ENCODE measurements at regions of chr6 and their contacts with region 1.

Region 1: GRCh38 chr6:27157459-27158315 is 89.8 kb upstream of the PRSS16 start:
- DNase-seq: peak; percentile 86
- H3K4me3 ChIP-seq: peak overlapping the region; percentile 48 to 82 (median 60)
- H3K27ac ChIP-seq: no peak overlapping the region
- H3K4me1 ChIP-seq: peaks cover 6% of the 10 kb centered on the region
- H3K27me3 ChIP-seq: no peaks in the 10 kb centered on the region
- CTCF ChIP-seq: peak; percentile 16 to 55

Region 2: DNA sequence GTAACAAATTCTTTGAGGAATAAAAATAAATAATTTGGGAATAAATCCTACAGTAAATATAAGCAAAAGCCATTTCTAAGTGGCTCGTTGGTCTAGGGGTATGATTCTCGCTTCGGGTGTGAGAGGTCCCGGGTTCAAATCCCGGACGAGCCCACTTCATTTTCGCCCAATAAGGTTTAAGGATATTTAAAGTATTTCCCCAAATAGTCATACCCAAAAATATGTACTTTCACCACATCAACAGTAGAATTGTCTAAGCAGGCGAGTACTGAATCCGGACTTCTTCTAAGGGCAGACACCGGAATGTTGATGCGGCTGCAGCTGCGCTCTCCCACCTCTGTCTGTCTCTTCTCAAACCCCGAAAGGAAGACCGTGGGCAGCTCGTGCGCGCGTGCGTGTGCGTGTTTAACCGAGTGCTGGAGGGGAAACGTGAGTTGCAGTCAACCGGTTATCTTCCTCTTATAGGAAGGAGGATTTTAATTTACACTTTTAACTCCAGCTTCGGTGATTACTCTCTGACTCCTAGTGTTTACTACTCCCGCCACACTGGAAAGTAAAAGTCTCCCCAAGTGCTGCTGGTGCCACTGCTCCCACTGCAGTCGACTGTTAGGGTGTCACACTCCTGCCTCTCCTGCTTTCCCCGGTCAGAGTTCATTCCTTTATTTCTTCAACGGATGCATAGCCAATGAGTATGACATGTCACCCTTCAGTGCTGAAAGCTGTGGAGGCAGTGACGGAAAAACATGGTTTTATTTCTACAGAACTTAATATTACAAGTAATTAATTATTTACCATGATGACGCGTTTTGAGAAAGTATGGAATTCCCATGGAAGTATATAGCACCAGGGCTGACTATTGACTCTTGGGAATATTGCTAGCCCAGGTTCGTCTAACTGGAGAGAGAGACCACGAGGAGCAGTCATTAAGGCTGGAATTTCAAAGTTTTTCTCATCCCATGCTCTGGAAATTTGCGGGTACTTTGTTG is 65.7 kb before region 1 on chr6:
- CTCF ChIA-PET with region 1: no interaction called
- dilution Hi-C with region 1: no loop called
- in situ Hi-C with region 1: no loop called
- intact Hi-C with region 1: loop called (anchors 2 kb)
- DNase-seq: peak; percentile 88
- H3K4me3 ChIP-seq: peak overlapping the region; percentile 39 to 58 (median 53)
- H3K27ac ChIP-seq: peak overlapping the region; percentile 23
- H3K4me1 ChIP-seq: peaks cover 17% of the 10 kb centered on the region
- H3K27me3 ChIP-seq: no peaks in the 10 kb centered on the region
- CTCF ChIP-seq: no peak

Region 3: GRCh38 chr6:27177485-27178406 is 20.1 kb after region 1 on chr6:
- CTCF ChIA-PET with region 1: interaction called, 11 read pairs
- dilution Hi-C with region 1: no loop called
- in situ Hi-C with region 1: no loop called
- intact Hi-C with region 1: loop called (anchors 2 kb)
- DNase-seq: peak; percentile 88
- H3K4me3 ChIP-seq: peak overlapping the region; percentile 80 to 100 (median 96)
- H3K27ac ChIP-seq: peak overlapping the region; percentile 62
- H3K4me1 ChIP-seq: peaks cover 3% of the 10 kb centered on the region
- H3K27me3 ChIP-seq: no peaks in the 10 kb centered on the region
- CTCF ChIP-seq: peak; percentile 53 to 69

Region 4: DNA sequence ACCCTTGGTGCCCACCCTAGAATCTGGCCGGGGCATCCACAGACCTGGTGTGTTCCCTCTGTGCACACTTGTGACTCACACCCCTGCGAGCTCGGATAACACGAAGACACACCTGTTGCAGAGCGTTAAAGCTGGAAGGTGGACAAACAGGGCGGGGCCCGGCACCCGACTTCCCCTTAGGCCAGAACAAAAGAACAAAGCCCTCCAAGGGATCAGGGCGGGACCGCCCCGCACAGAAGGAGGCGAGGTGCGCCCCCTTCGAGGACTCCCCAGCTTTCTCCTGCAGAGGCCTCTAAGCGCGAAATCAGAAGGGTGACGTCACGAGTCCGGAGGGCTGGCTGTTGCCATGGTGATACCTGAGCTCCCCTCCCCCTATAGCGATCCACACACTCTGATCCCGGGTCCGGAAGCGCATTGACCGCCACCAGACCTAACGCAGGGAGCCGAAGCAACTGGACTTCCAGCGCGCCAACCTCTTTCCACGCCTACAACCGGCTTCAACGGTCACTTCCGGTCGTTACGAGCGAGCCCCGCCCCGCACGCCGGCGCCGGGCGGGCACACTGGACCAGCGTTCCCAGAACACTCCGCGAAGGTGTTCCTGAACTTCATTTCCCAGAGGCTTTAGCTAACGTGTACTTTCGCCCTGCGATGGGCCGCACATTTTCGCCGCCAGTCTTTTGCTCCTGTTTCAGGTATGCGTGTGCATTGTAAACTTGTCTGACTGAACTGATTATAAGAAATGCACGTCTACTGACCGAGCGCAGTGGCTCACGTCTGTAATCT is 315.1 kb after region 1 on chr6 and contains the start of gene ZNF184:
- CTCF ChIA-PET with region 1: no interaction called
- dilution Hi-C with region 1: no loop called
- in situ Hi-C with region 1: no loop called
- intact Hi-C with region 1: loop called (anchors 1 kb)
- DNase-seq: peak; percentile 99
- H3K4me3 ChIP-seq: peak within 1 kb of the TSS; percentile 59 to 79 (median 63)
- H3K27ac ChIP-seq: peak within 1 kb of the TSS; percentile 86
- H3K4me1 ChIP-seq: peaks cover 6% of the 10 kb centered on the region
- H3K27me3 ChIP-seq: no peaks in the 10 kb centered on the region
- CTCF ChIP-seq: no peak
- total RNA-seq, gene ZNF184: 3.4 to 7.2 TPM

Measured in mammary epithelial cell (primary cell).